Activated CD4-positive, alpha-beta memory T cell treated with anti-CD3 and anti-CD28 coated beads for 36 hours (primary cell): ENCODE measurements at regions of chr3 and their contacts with region 1.

Region 1: GRCh38 chr3:17151598-17152373 is 267.0 kb downstream of the PLCL2 start:
- DNase-seq: peak; percentile 95
- H3K4me3 Mint-ChIP-seq: peak overlapping the region; percentile 60
- H3K27ac Mint-ChIP-seq: peak overlapping the region; percentile 88
- H3K4me1 Mint-ChIP-seq: peaks cover 31% of the 10 kb centered on the region
- H3K27me3 Mint-ChIP-seq: no peaks in the 10 kb centered on the region

Region 2: DNA sequence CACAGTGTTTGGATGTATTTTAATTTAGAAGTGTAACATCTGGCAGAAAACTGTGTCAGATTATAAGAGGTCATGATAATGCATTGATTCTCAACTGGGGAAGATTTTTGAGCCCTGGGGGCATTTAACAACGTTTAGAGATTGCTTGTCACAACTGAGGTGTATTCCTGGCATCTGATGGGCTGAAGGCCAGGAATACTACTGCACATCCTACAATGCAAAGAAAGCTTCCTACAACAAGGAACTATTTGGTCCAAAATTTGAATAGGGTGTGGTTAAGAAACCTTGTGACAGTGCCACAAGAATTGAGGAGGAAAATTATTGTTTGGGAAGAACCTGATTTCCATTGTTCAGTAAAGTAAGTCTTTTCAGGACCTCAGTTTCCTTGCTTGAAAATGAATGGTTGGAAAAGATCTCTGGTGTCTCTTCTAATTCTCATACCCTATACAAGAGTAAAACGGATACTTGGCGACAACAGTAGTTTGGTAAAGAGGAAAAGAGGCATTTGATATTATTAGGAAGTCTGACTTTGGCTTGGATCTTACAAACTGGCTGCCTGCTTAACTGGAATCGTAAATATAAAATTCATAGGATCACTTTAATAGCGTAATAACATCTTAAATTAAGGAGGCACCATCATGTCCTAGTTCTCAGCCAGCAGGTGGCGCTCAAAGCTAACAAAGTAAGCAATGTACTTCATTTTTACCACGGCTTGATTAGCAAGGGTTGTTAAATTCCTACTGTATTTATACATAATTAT is 550.8 kb before region 1 on chr3:
- CTCF ChIA-PET with region 1: interaction called, 6 read pairs
- POLR2A ChIA-PET with region 1: interaction called, 4 read pairs
- intact Hi-C with region 1: loop called (anchors 1 kb)
- DNase-seq: peak; percentile 81
- H3K4me3 Mint-ChIP-seq: no peak overlapping the region
- H3K27ac Mint-ChIP-seq: no peak overlapping the region
- H3K4me1 Mint-ChIP-seq: peaks cover 24% of the 10 kb centered on the region
- H3K27me3 Mint-ChIP-seq: peaks cover 10% of the 10 kb centered on the region

Region 3: DNA sequence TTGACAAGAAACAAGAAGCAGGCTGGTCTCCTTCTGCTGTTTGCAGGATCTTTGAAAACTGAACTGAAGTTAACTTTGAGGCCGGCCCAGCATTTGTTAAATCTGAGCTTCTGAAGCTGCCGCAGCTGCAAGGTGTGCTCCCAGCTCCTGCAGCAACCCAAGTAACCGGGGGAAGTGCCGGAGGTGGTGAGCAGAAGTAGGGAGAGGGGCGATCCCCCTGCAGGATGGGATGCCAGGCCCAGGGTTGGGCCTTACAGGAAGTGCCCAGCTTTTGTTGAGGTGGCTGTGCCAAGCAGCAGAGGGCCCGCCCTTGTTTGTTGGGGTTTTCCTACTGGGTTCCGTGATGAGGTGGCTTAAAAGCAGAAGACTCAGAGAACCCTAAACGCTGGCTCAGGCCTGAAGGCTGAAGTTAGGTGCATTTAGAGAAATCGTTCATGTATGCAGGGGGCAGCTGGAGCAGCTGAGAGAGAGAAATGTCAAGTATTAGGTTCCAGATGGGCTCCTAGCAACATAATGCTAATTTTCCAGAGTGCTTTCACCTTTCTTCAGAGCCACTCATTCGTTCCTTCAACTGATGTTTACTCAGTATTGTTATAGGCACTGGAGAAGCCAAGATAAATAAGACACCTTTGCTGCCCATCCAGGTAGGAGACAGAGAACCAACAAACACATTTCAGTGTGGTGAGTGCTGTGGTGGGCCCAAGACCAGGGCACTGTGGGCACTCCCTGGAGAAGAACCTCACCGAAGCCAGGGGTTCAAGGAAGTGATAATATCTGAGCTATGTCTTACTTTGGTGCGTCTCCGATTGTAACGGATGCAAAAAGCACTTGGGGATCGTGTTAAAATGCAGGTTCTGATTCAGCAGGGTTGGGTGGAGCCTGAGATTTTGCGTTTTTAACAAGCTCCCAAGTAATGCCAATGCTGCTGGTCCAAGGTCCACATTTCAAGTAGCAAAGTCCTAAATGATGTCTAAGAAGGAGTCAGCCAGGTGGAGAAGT is 309.2 kb before region 1 on chr3:
- CTCF ChIA-PET with region 1: interaction called, 3 read pairs
- POLR2A ChIA-PET with region 1: no interaction called
- intact Hi-C with region 1: loop called (anchors 1 kb)
- DNase-seq: peak; percentile 89
- H3K4me3 Mint-ChIP-seq: peak overlapping the region; percentile 67
- H3K27ac Mint-ChIP-seq: peak overlapping the region; percentile 91
- H3K4me1 Mint-ChIP-seq: peaks cover 80% of the 10 kb centered on the region
- H3K27me3 Mint-ChIP-seq: no peaks in the 10 kb centered on the region

Region 4: DNA sequence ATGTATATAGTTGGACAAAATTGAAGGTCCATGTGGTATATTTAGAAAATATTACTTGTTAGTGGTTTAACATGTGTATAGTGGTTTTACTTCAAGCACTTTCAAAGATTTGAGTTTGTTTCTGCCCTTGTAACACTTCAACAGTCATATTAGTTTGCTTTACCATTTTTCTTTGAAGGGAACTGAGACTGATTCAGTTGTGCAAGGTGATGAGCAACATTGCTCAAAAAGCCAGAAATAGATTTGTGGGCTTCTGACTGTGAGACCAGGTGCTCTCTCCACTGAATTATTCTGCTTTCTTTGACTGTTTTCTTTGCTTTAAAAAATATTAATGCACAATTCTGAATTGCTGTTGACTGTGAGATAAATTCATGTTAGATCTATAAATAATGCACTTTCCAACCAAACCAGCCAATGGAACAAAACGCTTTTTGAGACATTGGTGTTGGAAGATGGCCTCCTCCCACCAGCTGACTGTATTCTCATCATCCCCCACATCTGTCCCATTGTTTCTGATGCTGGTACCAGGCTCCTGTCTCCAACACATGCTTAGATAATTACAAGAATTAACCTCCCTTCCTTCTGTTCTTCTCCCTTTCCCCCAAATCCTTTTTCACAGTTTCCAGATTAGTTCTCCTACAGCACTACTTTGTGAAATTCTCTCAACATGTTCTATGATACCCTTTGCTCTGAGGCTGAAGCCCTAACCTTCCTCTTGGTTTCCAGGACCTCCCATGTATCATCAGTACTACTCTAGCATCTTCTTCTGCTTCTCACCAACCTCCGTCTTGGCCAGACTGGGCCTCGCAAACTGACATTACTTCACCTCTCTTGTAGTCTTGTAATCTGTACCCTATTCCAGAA is 239.2 kb before region 1 on chr3:
- CTCF ChIA-PET with region 1: no interaction called
- POLR2A ChIA-PET with region 1: interaction called, 3 read pairs
- intact Hi-C with region 1: loop called (anchors 2 kb)
- DNase-seq: no peak
- H3K4me3 Mint-ChIP-seq: no peak overlapping the region
- H3K27ac Mint-ChIP-seq: peak overlapping the region; percentile 71
- H3K4me1 Mint-ChIP-seq: peaks cover 70% of the 10 kb centered on the region
- H3K27me3 Mint-ChIP-seq: no peaks in the 10 kb centered on the region

Region 5: GRCh38 chr3:16936233-16936632 is 215.6 kb before region 1 on chr3:
- CTCF ChIA-PET with region 1: no interaction called
- POLR2A ChIA-PET with region 1: no interaction called
- intact Hi-C with region 1: no loop called
- DNase-seq: no peak
- H3K4me3 Mint-ChIP-seq: no peak overlapping the region
- H3K27ac Mint-ChIP-seq: no peak overlapping the region
- H3K4me1 Mint-ChIP-seq: peaks cover 84% of the 10 kb centered on the region
- H3K27me3 Mint-ChIP-seq: no peaks in the 10 kb centered on the region

Region 6: DNA sequence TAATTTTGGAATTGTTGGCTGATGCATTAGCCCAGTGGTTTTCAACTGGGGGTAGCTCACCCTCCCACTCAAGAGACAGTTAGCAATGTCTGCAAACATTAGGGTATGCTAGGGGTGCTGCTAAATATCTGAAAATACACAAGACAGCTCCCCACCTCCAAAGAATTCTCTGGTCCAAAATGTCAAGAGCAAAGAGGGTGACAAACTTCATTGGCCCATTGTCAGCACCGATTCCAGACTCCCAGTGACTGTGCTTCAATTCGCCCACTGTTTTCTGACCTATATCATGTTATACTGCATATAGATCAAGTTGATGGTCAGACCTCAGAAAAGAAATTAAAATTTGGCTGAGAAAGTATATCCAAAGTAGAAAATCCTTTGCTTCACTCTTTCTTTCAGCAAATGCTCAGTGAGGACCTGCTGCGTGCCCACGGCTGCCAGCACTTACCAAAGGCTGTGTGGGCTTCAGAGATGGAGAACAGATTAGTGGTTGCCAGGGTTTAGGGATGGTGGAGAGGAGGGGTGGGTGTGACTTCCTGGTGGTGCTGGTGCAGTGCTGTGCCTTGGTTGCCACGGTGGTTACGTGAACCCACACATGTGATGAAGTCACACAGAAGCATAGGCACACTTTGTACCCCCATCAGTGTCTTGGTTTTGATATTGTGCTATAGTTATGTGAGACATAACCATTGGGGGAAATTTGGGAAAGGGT is 63.0 kb before region 1 on chr3:
- CTCF ChIA-PET with region 1: no interaction called
- POLR2A ChIA-PET with region 1: no interaction called
- intact Hi-C with region 1: loop called (anchors 5 kb)
- DNase-seq: peak; percentile 42
- H3K4me3 Mint-ChIP-seq: no peak overlapping the region
- H3K27ac Mint-ChIP-seq: no peak overlapping the region
- H3K4me1 Mint-ChIP-seq: peaks cover 30% of the 10 kb centered on the region
- H3K27me3 Mint-ChIP-seq: no peaks in the 10 kb centered on the region

Region 7: GRCh38 chr3:17125738-17126442 is 25.9 kb before region 1 on chr3:
- CTCF ChIA-PET with region 1: no interaction called
- POLR2A ChIA-PET with region 1: no interaction called
- intact Hi-C with region 1: no loop called
- DNase-seq: no peak
- H3K4me3 Mint-ChIP-seq: no peak overlapping the region
- H3K27ac Mint-ChIP-seq: no peak overlapping the region
- H3K4me1 Mint-ChIP-seq: no peaks in the 10 kb centered on the region
- H3K27me3 Mint-ChIP-seq: no peaks in the 10 kb centered on the region

Region 8: GRCh38 chr3:17218587-17218986 is 66.8 kb after region 1 on chr3:
- CTCF ChIA-PET with region 1: no interaction called
- POLR2A ChIA-PET with region 1: no interaction called
- intact Hi-C with region 1: no loop called
- DNase-seq: no peak
- H3K4me3 Mint-ChIP-seq: no peak overlapping the region
- H3K27ac Mint-ChIP-seq: no peak overlapping the region
- H3K4me1 Mint-ChIP-seq: no peaks in the 10 kb centered on the region
- H3K27me3 Mint-ChIP-seq: no peaks in the 10 kb centered on the region

Region 9: DNA sequence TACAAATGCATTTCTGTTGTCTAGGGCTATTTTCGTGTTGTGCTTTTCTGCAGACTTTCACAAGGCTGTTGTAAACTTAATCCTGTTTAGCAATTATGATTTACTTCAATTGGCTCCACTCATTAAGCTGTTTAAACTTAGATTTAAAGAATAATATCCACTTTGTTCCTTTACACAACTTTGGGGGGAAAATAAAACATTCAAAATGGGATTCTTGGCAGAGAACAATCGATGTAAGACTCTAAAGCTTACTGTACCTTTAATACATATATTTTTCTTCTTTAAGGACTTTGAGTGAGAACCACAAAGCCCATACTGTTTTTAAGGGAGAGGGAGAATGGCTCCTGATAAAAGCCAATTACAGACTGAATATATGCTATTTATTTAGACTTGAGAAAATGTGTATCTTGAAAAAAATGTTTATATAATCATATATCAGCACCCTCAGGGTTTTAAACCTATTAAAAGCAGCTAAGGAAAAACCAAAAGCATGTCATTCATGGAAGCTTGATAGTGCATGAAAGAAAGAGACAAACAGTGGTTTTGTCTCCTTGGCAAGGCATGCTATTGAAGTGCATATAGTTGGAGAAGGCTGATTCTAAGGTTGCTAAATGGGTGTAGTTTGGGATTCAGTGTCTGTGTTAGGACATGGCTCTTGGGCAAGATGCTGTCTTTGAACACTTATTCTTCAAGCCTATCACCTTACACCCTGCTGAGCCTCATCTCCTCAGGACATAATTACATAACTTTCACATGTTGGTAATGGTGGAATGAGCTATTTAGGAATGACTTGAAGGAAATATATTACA is 884.1 kb after region 1 on chr3:
- CTCF ChIA-PET with region 1: no interaction called
- POLR2A ChIA-PET with region 1: no interaction called
- intact Hi-C with region 1: no loop called
- DNase-seq: no peak
- H3K4me3 Mint-ChIP-seq: no peak overlapping the region
- H3K27ac Mint-ChIP-seq: no peak overlapping the region
- H3K4me1 Mint-ChIP-seq: no peaks in the 10 kb centered on the region
- H3K27me3 Mint-ChIP-seq: peaks cover 11% of the 10 kb centered on the region